HCT116 (cell line): ENCODE measurements at regions of chr9 and their contacts with region 1.

Region 1: GRCh38 chr9:105881654-105882349 is 187.5 kb downstream of the TMEM38B start:
- DNase-seq: peak; percentile 51
- ATAC-seq: peak; percentile 93
- H3K4me3 ChIP-seq: no peak overlapping the region
- H3K27ac ChIP-seq: no peak overlapping the region
- H3K4me1 ChIP-seq: no peaks in the 10 kb centered on the region
- H3K27me3 ChIP-seq: no peaks in the 10 kb centered on the region
- CTCF ChIP-seq: peak; percentile 72 to 98 (median 90)
- POLR2A ChIP-seq: no peak
- RAD21 ChIP-seq: peak; percentile 73

Region 2: GRCh38 chr9:105425841-105426436 is 455.9 kb before region 1 on chr9:
- CTCF ChIA-PET with region 1: no interaction called
- POLR2A ChIA-PET with region 1: no interaction called
- RAD21 ChIA-PET with region 1: no interaction called
- intact Hi-C with region 1: loop called (anchors 5 kb)
- DNase-seq: no peak
- ATAC-seq: peak; percentile 85
- H3K4me3 ChIP-seq: no peak overlapping the region
- H3K27ac ChIP-seq: no peak overlapping the region
- H3K4me1 ChIP-seq: no peaks in the 10 kb centered on the region
- H3K27me3 ChIP-seq: no peaks in the 10 kb centered on the region
- CTCF ChIP-seq: peak; percentile 37 to 58 (median 51); a peak in 4 of 6 replicates
- POLR2A ChIP-seq: no peak
- RAD21 ChIP-seq: peak; percentile 71

Region 3: DNA sequence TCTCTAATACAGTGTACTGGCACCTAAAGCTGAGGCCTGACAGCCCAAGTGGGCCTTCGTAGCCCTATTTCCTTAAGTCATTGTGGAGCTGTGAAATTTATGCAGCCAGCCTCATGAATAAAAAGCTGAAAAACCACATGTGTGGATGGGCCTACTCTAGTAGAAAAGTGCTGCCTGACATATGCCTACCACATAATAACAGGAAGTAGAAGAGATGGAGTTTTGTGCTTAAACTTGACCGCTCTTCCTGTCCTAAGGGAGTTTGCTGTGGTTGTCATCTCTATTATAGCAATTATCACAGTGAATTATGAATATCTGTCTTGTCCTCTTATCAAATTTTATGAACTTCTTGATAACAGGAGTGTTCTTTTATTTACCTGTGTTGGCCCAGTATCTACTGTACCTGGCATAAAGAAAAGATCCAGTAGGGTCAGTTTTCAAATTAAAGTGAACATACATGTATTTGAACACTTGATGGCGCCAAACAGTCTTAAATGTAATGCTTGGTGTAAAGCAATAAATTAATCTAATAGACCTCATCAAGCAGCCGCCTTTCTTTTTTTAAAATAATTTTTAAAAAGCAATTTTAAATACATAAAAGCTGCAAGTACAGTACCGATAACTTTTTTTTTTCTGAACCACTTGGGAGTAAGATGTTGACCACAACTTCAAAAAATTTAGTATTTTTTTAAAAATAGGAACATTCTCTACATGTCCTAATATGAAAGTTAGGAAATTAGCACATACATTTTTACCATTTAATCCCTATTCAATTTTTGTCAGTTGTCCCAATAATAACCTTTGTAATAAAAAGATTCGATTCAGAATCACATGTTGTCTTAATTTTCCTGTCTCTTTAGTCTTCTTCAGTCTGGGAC is 272.8 kb before region 1 on chr9:
- CTCF ChIA-PET with region 1: no interaction called
- POLR2A ChIA-PET with region 1: no interaction called
- RAD21 ChIA-PET with region 1: no interaction called
- intact Hi-C with region 1: loop called (anchors 2 kb)
- DNase-seq: peak; percentile 48
- ATAC-seq: peak; percentile 82
- H3K4me3 ChIP-seq: no peak overlapping the region
- H3K27ac ChIP-seq: no peak overlapping the region
- H3K4me1 ChIP-seq: no peaks in the 10 kb centered on the region
- H3K27me3 ChIP-seq: no peaks in the 10 kb centered on the region
- CTCF ChIP-seq: peak; percentile 43 to 60 (median 45); a peak in 4 of 6 replicates
- POLR2A ChIP-seq: no peak
- RAD21 ChIP-seq: peak; percentile 59

Region 4: DNA sequence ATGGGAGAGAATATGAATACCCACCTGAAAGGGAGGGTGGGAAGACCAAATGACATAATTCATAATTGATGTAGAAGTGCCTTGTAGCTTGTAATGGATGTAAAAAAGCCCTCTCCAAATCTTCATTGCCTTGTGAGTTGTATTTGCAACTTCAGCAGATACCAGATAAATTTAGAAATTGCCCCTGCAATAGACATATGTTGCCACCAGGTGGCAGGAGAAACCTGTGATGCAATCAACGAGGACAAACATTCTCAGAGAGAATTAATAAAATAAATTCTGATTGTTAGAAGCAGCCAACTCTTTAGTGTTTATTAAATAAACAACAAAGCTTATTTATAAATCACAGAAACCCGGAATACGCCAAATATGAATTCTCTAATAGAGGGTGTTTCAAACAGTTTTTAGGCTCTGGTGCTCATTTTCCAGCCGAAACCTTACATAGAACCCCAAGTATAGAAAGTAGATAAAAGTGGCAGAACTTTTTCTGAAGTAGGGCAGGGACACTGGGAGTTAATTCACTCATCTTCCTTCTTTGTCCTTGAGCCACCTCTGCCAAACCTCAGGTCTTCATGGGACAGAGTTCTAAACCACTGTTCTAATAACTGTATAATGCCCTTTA is 39.7 kb before region 1 on chr9:
- CTCF ChIA-PET with region 1: interaction called, 24 read pairs
- POLR2A ChIA-PET with region 1: no interaction called
- RAD21 ChIA-PET with region 1: no interaction called
- intact Hi-C with region 1: loop called (anchors 1 kb)
- DNase-seq: peak; percentile 18
- ATAC-seq: no peak
- H3K4me3 ChIP-seq: no peak overlapping the region
- H3K27ac ChIP-seq: no peak overlapping the region
- H3K4me1 ChIP-seq: no peaks in the 10 kb centered on the region
- H3K27me3 ChIP-seq: no peaks in the 10 kb centered on the region
- CTCF ChIP-seq: peak; percentile 67 to 90 (median 79)
- POLR2A ChIP-seq: no peak
- RAD21 ChIP-seq: peak; percentile 84

Region 5: GRCh38 chr9:105921057-105921735 is 39.4 kb after region 1 on chr9:
- CTCF ChIA-PET with region 1: no interaction called
- POLR2A ChIA-PET with region 1: no interaction called
- RAD21 ChIA-PET with region 1: no interaction called
- intact Hi-C with region 1: no loop called
- DNase-seq: no peak
- ATAC-seq: no peak
- H3K4me3 ChIP-seq: no peak overlapping the region
- H3K27ac ChIP-seq: no peak overlapping the region
- H3K4me1 ChIP-seq: no peaks in the 10 kb centered on the region
- H3K27me3 ChIP-seq: no peaks in the 10 kb centered on the region
- CTCF ChIP-seq: no peak
- POLR2A ChIP-seq: no peak
- RAD21 ChIP-seq: no peak

Region 6: DNA sequence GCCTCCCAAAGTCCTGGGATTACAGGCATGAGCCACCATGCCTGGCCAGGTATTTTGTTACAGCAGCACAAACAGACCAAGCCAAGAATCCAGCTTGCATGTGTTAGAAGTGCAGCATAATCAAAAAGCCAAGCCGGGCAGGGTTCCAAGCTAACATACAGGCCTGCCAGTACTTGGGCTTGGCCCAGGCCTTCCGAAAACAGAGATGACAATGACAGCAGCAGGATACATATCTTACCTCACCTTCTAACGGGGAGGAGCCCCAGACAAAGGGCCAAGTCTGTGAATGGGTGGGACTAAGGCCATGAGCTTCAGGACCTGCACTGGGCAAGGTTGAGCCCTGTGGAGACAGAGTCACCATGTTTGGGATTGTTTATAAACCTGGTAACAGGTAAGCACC is 889.8 kb after region 1 on chr9:
- CTCF ChIA-PET with region 1: no interaction called
- POLR2A ChIA-PET with region 1: no interaction called
- RAD21 ChIA-PET with region 1: no interaction called
- intact Hi-C with region 1: no loop called
- DNase-seq: no peak
- ATAC-seq: no peak
- H3K4me3 ChIP-seq: no peak overlapping the region
- H3K27ac ChIP-seq: no peak overlapping the region
- H3K4me1 ChIP-seq: no peaks in the 10 kb centered on the region
- H3K27me3 ChIP-seq: no peaks in the 10 kb centered on the region
- CTCF ChIP-seq: no peak
- POLR2A ChIP-seq: no peak
- RAD21 ChIP-seq: no peak